Activated CD8-positive, alpha-beta memory T cell treated with anti-CD3 and anti-CD28 coated beads, Interleukin-2, amount 10 ng/mL, durations not matched to agents 7 days and 5 days (primary cell): ENCODE measurements at regions of chr4 and their contacts with region 1.

Region 1: GRCh38 chr4:119628308-119629141 is at the start of gene PDE5A:
- DNase-seq: peak; percentile 83
- ATAC-seq: peak; percentile 88
- H3K4me3 Mint-ChIP-seq: peak within 1 kb of the TSS; percentile 76
- H3K27ac Mint-ChIP-seq: no peak within 1 kb of the TSS
- H3K4me1 Mint-ChIP-seq: peaks cover 17% of the 10 kb centered on the region
- H3K27me3 Mint-ChIP-seq: peaks cover 43% of the 10 kb centered on the region
- total RNA-seq, gene PDE5A: 0.18 TPM in 1 of 2 experiments, not detected in the other

Region 2: DNA sequence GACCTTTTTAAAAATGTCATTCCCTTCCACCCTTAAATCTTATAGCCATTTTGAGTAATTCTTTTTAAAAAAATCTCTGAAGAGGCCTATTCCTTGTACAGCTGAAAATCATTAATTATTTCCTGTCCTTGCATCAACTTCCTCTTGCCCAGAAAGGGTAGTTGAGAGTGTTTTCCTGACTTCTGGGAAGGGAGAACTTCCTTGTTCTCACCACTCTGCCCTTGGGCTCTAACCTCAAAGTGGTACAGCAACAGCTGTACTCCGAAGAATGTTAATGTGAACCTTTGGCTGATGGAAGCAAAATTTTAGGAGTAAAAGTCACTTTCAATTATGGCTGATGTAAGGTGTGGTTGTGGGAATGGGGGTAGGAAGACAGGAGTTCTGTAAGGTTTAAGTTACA is 291.5 kb before region 1 on chr4:
- CTCF ChIA-PET with region 1: no interaction called
- DNase-seq: no peak
- ATAC-seq: no peak
- H3K4me3 Mint-ChIP-seq: no peak overlapping the region
- H3K27ac Mint-ChIP-seq: no peak overlapping the region
- H3K4me1 Mint-ChIP-seq: peaks cover 2% of the 10 kb centered on the region
- H3K27me3 Mint-ChIP-seq: no peaks in the 10 kb centered on the region

Region 3: GRCh38 chr4:119525005-119525749 is 103.3 kb before region 1 on chr4:
- CTCF ChIA-PET with region 1: no interaction called
- DNase-seq: no peak
- ATAC-seq: no peak
- H3K4me3 Mint-ChIP-seq: no peak overlapping the region
- H3K27ac Mint-ChIP-seq: no peak overlapping the region
- H3K4me1 Mint-ChIP-seq: no peaks in the 10 kb centered on the region
- H3K27me3 Mint-ChIP-seq: no peaks in the 10 kb centered on the region

Region 4: DNA sequence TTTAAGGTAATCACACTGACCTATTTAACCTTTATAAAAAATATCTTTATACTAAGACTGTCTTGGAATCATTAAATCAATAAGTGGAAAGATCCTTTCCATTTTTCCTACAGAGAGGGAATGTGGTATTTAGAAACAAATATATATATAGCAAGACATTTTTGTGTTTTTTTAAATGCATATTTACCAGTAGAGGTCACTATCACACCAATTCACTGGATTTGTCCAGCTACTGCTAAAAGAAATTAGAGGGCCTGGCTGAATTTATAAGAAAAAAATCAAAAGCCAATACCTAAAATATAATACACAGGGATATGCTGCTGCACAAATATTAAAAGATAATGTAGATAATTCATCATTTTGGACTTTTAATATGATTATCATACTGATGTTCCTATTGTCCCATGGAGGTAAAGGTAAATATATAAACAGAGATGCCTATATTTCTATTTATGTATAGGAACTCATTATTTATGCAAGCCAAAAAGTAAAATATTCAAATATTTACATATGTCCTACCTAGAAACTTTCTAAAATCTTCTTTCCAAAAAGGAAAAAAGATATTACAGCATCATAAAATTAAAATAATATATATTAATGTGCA is 69.4 kb before region 1 on chr4:
- CTCF ChIA-PET with region 1: interaction called, 26 read pairs
- DNase-seq: no peak
- ATAC-seq: no peak
- H3K4me3 Mint-ChIP-seq: no peak overlapping the region
- H3K27ac Mint-ChIP-seq: no peak overlapping the region
- H3K4me1 Mint-ChIP-seq: no peaks in the 10 kb centered on the region
- H3K27me3 Mint-ChIP-seq: no peaks in the 10 kb centered on the region

Region 5: GRCh38 chr4:119655111-119655837 is 26.7 kb after region 1 on chr4:
- CTCF ChIA-PET with region 1: interaction called, 10 read pairs
- DNase-seq: no peak
- ATAC-seq: no peak
- H3K4me3 Mint-ChIP-seq: no peak overlapping the region
- H3K27ac Mint-ChIP-seq: no peak overlapping the region
- H3K4me1 Mint-ChIP-seq: no peaks in the 10 kb centered on the region
- H3K27me3 Mint-ChIP-seq: peaks cover 8% of the 10 kb centered on the region

Region 6: GRCh38 chr4:119833611-119834010 is 205.1 kb after region 1 on chr4:
- CTCF ChIA-PET with region 1: no interaction called
- DNase-seq: no peak
- ATAC-seq: no peak
- H3K4me3 Mint-ChIP-seq: no peak overlapping the region
- H3K27ac Mint-ChIP-seq: no peak overlapping the region
- H3K4me1 Mint-ChIP-seq: no peaks in the 10 kb centered on the region
- H3K27me3 Mint-ChIP-seq: no peaks in the 10 kb centered on the region

Region 7: GRCh38 chr4:120049732-120050494 is 421.4 kb after region 1 on chr4:
- CTCF ChIA-PET with region 1: interaction called, 38 read pairs
- DNase-seq: peak; percentile 79
- ATAC-seq: peak; percentile 92
- H3K4me3 Mint-ChIP-seq: no peak overlapping the region
- H3K27ac Mint-ChIP-seq: no peak overlapping the region
- H3K4me1 Mint-ChIP-seq: peaks cover 2% of the 10 kb centered on the region
- H3K27me3 Mint-ChIP-seq: no peaks in the 10 kb centered on the region

Region 8: DNA sequence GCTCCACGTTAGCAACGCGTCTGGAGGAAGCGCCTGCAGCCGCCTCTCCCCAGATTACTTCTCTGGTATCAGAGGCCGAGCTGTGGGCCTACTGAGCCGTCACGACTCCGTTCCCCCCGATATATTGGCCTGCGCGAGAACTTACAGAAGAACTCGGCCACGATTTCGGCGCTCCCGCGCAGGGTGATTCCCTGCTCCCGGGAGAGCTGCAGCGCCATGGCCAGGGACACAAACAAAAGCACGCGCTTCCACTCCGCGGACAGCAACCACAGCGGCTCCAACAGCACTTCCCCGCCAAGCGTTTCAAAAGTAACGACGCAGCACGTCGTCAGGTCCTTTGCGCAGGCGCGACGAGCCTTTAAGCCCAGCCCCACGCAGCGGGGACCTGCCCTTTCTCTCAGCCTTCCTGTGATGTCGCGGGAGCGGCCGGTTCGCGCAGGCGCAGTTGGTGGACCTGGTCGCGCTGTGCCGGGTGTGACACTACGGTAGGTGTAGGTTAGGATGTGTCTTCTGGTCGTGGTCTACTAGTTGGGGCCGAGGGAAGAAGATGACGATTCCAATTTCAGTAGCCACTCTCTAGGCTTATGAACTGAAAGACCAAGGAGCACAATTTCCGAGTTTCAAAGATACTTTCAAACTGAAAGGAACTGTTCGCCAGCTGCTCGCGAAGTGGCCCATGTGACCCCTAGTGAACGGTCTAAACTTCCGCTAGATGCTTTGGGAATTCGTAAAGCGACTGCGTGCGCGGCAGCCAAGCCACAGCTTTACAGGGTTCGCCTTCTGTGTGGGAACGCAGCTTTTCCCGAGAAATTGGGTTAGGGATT is 438.2 kb after region 1 on chr4 and contains the start of gene MAD2L1:
- CTCF ChIA-PET with region 1: interaction called, 11 read pairs
- DNase-seq: peak; percentile 99
- ATAC-seq: peak; percentile 94
- H3K4me3 Mint-ChIP-seq: peak within 1 kb of the TSS; percentile 91
- H3K27ac Mint-ChIP-seq: peak within 1 kb of the TSS; percentile 99
- H3K4me1 Mint-ChIP-seq: peaks cover 67% of the 10 kb centered on the region
- H3K27me3 Mint-ChIP-seq: no peaks in the 10 kb centered on the region
- total RNA-seq, gene MAD2L1: 66.9 to 75.4 TPM